Activated CD4-positive, alpha-beta T cell treated with anti-CD3 and anti-CD28 coated beads, Interleukin-2, amount 10 ng/mL, durations not matched to agents 24 days and 14 days (primary cell): ENCODE measurements at regions of chrX and their contacts with region 1.

Region 1: DNA sequence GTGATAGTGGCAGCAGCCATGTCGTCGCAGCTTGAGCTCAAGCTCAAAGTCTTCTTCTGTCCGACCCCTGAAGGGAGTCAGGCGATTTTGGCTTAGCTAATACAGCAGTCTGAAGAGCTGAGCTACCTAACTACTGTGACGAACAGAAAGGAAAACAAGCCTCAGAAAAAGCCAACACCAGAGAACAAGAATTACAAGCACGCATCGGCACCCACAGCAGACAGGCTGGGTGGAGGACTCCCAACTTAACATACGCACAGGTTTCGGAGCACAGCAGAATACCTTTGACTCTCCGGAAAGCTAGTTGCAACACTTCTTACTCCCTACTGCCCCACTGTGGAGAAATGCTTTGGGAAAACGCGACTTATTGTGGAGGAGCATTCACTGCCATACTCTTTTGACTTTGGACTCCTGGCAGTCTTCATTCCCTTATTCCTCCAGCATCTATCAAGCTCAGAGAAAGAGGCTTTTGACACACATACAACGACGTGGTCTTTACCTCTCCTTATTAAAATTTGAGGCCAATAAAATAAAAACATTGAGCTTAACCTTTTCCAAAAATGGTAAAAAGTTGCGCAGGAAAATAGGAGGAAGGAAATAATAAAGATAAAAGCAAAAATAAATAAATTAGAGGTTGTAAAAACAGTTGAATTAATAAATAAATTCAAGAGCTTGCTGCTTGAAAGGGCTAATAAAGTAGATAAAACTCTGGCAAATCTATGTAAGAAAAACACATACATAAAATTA is 41.3 kb upstream of the GPC3 start:
- DNase-seq: peak; percentile 79
- H3K4me3 Mint-ChIP-seq: peak overlapping the region; percentile 60
- H3K27ac Mint-ChIP-seq: no peak overlapping the region
- H3K4me1 Mint-ChIP-seq: peaks cover 7% of the 10 kb centered on the region
- H3K27me3 Mint-ChIP-seq: no peaks in the 10 kb centered on the region

Region 2: DNA sequence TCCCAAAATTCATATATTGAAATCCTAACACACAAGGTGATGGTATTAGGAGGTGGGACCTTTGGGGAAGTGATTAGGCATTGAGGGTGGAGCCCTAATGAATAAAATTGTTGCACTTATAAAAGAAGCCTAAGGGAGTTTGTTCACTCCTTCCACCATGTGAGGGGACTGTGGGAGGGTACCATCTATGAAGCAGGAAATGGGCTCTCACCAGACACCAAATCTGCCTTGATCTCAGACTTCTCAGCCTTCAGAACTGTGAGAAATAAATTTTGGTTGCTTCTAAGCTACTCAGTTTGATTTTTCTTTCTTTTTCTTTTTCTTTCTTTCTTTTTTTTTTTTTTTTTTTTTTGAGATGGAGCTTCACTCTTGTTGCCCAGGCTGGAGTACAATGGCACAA is 74.9 kb after region 1 on chrX:
- intact Hi-C with region 1: no loop called
- DNase-seq: no peak
- H3K4me3 Mint-ChIP-seq: no peak overlapping the region
- H3K27ac Mint-ChIP-seq: no peak overlapping the region
- H3K4me1 Mint-ChIP-seq: no peaks in the 10 kb centered on the region
- H3K27me3 Mint-ChIP-seq: no peaks in the 10 kb centered on the region

Region 3: GRCh38 chrX:134115270-134115669 is 88.5 kb after region 1 on chrX:
- intact Hi-C with region 1: no loop called
- DNase-seq: no peak
- H3K4me3 Mint-ChIP-seq: no peak overlapping the region
- H3K27ac Mint-ChIP-seq: no peak overlapping the region
- H3K4me1 Mint-ChIP-seq: no peaks in the 10 kb centered on the region
- H3K27me3 Mint-ChIP-seq: peaks cover 13% of the 10 kb centered on the region

Region 4: GRCh38 chrX:134158821-134159512 is 132.2 kb after region 1 on chrX:
- intact Hi-C with region 1: loop called (anchors 10 kb)
- DNase-seq: no peak
- H3K4me3 Mint-ChIP-seq: no peak overlapping the region
- H3K27ac Mint-ChIP-seq: peak overlapping the region; percentile 83
- H3K4me1 Mint-ChIP-seq: peaks cover 23% of the 10 kb centered on the region
- H3K27me3 Mint-ChIP-seq: no peaks in the 10 kb centered on the region